ENCODE measurements at regions of chr6 and their contacts with region 1.

Region 1: DNA sequence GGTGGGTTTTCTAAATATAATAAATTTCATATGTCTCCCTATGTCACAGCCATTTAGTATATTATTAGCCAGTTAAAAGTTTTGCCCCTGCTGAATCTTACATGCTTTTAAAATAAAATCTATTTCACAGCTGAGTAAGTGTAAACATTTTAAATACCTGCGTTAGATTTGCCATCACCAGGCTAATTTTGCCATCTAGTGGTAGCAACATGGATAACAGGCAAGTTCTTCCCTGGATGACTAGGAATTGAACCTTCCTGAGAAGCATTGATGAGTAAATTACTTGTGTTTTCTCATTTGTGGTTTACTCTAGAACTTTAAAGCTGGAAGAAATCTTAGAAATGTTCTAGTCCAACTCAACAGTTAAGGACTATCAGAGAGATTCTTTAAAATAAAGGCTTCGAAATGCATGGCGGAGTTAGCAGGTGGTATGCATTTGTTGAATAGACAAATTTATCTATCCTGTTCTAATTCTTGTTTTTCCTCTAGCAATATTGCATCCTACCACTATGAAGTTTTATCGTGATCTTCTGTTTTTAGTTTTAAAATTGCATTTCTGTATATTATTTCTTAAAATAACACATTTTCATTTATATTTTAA is 2.6 kb downstream of the PRSS35 start:
- DNase-seq: no peak
- ATAC-seq: no peak
- H3K4me3 ChIP-seq: no peak overlapping the region
- H3K27ac ChIP-seq: no peak overlapping the region
- H3K4me1 ChIP-seq: no peaks in the 10 kb centered on the region
- H3K27me3 ChIP-seq: no peaks in the 10 kb centered on the region

Region 2: DNA sequence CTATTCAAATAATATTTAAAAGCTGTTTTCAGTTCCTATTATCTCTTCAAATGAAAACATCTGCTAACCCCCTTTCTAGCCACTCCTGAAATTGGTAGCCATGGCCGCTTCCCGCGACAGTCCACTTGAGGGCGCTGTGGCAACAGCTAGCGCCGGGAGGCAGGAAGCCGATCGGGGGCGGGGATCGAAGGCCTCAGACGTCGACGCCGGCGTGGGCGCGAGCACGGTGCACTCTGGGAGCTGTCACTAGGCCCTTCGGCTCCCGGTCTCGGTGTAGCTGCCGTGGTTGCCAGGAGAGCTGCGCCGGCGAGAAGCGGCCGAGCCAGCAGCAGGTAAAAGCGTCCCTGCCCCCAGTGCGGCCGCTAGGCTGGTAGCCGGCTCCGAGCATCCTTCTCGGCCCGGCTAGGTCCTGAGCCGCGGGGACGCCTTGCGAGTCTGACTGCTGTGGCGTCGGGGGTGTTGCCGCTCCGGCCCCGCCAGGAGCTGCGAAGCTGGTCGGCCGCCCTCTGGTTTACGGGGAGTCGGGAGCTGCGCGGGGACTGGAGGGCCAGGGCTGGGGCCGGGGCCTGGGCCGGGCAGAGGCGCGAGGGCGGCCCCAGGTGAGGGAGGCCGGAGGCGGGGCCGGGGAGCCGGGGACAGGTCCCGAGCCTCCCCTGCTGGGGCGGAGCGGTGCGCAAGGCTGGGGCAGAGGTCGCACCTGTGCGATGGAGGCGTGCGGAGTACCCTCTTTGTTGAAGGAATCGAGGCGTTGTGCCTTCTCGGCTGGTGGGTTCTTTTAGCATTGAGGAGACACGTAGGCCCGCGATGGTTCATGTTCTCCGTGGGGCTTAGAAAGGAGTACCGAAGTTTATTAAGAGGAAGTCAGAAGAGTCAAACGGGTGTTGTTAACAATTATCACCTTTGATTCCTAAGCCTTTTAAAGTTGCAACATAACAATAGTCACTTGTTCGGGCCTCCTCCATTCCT is 447.2 kb before region 1 on chr6 and contains the start of gene DOP1A:
- intact Hi-C with region 1: loop called in 2 of 4 experiments (anchors 5 to 10 kb)
- DNase-seq: peak; percentile 97 to 99 (median 98)
- ATAC-seq: peak; percentile 97 to 98
- H3K4me3 ChIP-seq: peak within 1 kb of the TSS; percentile 81
- H3K27ac ChIP-seq: peak within 1 kb of the TSS; percentile 75
- H3K4me1 ChIP-seq: peaks cover 2% of the 10 kb centered on the region
- H3K27me3 ChIP-seq: no peaks in the 10 kb centered on the region
- total RNA-seq, gene DOP1A: 19.1 to 19.9 (median 19.5) TPM

Region 3: DNA sequence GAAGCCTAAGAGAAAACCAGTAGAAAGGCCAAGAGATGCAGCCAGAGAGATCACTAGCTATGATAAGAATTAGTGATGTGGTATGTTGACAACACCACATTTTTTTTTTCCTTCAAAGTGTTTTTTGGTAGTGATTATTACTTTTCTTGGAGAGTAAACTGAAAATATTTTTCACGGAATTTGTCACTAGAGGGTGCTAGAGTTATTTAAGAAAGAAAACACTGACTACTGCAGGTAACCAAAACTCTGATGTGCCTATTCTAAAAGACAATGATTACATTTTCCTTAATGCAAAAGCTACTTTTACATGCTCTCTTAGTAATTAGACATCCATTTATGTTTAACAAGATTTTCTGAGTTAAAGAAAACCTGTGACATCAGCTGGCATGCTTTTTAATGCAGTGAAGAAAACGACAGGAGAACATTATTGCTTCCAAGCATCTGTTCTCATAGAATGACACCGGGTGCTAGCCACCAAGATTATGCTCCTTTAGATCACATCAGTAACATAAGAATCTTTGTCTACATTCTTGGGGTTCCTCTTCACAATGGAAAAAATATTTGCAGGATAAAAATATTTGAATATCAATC is 293.0 kb before region 1 on chr6:
- intact Hi-C with region 1: loop called (anchors 2 to 5 kb)
- DNase-seq: no peak
- ATAC-seq: no peak
- H3K4me3 ChIP-seq: no peak overlapping the region
- H3K27ac ChIP-seq: no peak overlapping the region
- H3K4me1 ChIP-seq: no peaks in the 10 kb centered on the region
- H3K27me3 ChIP-seq: no peaks in the 10 kb centered on the region

Region 4: DNA sequence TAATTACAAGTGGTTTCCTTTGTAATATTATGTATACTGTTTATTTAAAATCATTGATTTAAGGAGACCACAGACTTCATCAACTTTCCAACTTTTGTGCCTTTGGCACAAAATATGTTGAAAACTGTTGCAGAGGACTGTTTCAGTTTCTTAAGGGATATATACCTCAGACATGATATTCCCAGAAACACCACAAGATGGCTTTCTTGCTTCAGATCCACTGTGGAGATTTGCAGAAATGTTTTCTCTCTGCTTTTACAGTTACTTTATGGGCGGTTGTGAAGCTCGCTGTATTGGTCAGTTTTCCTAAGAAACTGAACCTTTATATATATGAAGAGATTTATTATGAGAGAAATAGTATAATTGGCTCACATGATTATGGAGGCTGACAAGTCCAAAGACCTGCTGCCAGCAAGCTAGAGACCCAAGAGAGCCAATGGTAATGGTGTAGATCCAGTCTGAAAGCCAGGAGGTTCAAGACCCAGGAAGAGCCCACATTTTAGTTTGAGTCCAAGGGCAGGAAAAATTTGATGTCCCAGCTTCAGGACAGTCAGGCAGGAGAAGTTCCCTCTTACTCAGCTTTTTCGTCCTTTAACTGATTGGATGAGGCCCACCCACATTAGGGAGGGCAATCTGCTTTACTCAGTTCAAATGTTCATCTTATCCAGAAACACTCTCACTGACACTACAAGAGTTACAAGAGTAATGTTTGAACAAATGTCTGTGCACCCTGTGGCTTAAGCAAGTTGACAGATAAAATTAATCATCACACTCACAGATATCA is 96.9 kb before region 1 on chr6:
- intact Hi-C with region 1: loop called in 3 of 4 experiments (anchors 2 to 5 kb)
- DNase-seq: no peak
- ATAC-seq: peak; percentile 64
- H3K4me3 ChIP-seq: no peak overlapping the region
- H3K27ac ChIP-seq: no peak overlapping the region
- H3K4me1 ChIP-seq: no peaks in the 10 kb centered on the region
- H3K27me3 ChIP-seq: no peaks in the 10 kb centered on the region

Region 5: GRCh38 chr6:83429857-83430610 is 84.9 kb before region 1 on chr6:
- intact Hi-C with region 1: loop called in 1 of 4 experiments (anchors 5 kb)
- DNase-seq: peak in 1 of 3 donors; percentile 33
- ATAC-seq: peak; percentile 45 to 53
- H3K4me3 ChIP-seq: peak overlapping the region; percentile 82
- H3K27ac ChIP-seq: peak overlapping the region; percentile 85
- H3K4me1 ChIP-seq: no peaks in the 10 kb centered on the region
- H3K27me3 ChIP-seq: no peaks in the 10 kb centered on the region

Region 6: DNA sequence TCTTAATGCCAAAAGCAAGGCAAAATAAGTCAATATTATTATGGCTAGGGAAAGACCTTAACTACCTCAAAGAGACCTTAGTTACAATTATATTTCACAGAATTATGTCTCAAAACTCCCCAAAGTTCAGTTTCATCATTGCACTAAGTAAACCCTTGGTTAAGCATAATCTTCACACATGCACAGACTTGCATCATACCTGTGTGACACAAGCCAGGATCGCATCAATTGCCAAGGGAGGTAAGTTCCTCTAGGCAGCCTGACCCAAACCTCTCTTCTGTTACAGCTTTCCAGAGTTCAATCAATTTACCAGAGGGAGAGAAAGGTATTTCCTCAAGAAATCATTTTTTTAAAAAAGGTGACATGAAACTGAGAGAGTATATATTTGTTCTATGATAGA is 34.5 kb before region 1 on chr6:
- intact Hi-C with region 1: no loop called
- DNase-seq: no peak
- ATAC-seq: no peak
- H3K4me3 ChIP-seq: no peak overlapping the region
- H3K27ac ChIP-seq: no peak overlapping the region
- H3K4me1 ChIP-seq: no peaks in the 10 kb centered on the region
- H3K27me3 ChIP-seq: no peaks in the 10 kb centered on the region

Region 7: GRCh38 chr6:83592770-83593394 is 77.9 kb after region 1 on chr6:
- intact Hi-C with region 1: no loop called
- DNase-seq: no peak
- ATAC-seq: no peak
- H3K4me3 ChIP-seq: no peak overlapping the region
- H3K27ac ChIP-seq: no peak overlapping the region
- H3K4me1 ChIP-seq: no peaks in the 10 kb centered on the region
- H3K27me3 ChIP-seq: no peaks in the 10 kb centered on the region